CD8-positive, alpha-beta memory T cell (primary cell): ENCODE measurements at regions of chr9 and their contacts with region 1.

Region 1: DNA sequence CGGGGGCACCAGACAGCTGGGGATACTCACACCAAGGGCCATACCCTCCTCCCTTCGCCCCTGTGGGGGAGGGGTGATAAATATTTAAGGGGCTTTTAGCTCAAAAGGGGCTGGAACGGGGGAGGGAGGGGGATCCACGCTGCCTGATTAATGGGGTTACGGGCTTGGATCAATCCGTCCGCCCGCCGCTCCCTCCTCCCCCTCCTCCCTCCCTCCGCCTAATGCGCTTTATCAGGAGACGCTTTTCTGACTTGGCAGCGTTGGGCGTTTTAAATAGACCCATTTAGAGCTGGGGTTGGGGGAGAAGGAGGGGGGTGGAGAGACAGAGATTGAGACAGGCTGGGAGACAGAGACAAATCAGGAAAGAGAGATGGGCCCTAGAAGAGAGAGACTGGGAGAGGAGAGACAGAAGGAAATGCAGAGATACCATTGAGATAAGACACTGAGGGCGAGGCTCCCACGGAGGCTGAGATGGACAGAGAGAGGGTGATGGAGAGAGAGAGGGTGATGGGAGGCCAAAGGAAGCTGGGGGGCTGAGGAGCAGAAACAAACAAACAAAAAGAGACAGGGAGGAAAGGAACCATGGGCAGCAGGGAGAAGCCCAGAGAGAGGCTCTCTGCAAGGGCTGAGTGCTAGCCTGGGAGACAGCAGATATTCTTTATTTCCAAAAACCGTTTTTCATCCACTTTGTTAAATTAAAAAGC is 10.3 kb downstream of the CNTFR start:
- DNase-seq: no peak
- H3K4me3 ChIP-seq: no peak overlapping the region
- H3K4me3 Mint-ChIP-seq: peak overlapping the region in 3 of 7 donors; percentile 10 to 49 (median 18)
- H3K27ac ChIP-seq: no peak overlapping the region
- H3K27ac Mint-ChIP-seq: no peak overlapping the region
- H3K4me1 ChIP-seq: peaks cover 6% of the 10 kb centered on the region
- H3K4me1 Mint-ChIP-seq: peaks cover 4 to 15% (median 12%) of the 10 kb centered on the region in 3 donors
- H3K27me3 ChIP-seq: peaks cover 24% of the 10 kb centered on the region
- H3K27me3 Mint-ChIP-seq: peaks cover 55 to 78% of the 10 kb centered on the region in 2 donors

Region 2: DNA sequence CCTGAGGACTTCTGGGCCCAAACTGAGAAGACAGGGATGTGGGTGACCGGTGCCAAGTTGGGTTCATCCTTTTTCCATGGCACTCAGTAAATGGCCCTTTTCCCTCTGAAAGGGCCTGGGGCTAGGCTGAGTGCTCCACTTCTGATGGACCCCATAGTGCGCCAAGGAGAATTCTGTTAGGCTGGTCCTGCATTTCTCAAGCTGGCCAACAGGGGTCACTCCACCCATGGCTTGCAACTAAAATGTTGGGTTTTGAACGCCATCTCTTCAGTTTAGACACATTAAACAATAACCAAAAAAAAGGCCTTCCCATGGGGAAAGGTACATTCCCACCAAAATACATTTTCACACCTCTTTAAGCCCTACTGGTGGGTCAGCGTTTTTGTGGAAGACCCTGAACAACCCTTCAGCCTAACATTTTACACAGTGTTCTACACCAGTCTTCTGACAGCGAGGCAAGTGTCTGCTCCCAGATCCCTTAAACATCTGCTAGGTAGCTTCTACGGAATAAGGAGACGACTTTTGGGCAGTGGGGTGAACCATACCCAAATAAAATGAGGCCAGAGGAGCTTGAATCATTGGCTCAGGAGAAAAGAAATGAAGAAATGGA is 17.0 kb before region 1 on chr9:
- CTCF ChIA-PET with region 1: no interaction called
- POLR2A ChIA-PET with region 1: no interaction called
- DNase-seq: no peak
- H3K4me3 ChIP-seq: no peak overlapping the region
- H3K4me3 Mint-ChIP-seq: no peak overlapping the region
- H3K27ac ChIP-seq: no peak overlapping the region
- H3K27ac Mint-ChIP-seq: no peak overlapping the region
- H3K4me1 ChIP-seq: no peaks in the 10 kb centered on the region
- H3K4me1 Mint-ChIP-seq: peaks cover 0 to 2% (median 0%) of the 10 kb centered on the region in 3 donors
- H3K27me3 ChIP-seq: peaks cover 4% of the 10 kb centered on the region
- H3K27me3 Mint-ChIP-seq: peaks cover 13 to 58% of the 10 kb centered on the region in 2 donors

Region 3: DNA sequence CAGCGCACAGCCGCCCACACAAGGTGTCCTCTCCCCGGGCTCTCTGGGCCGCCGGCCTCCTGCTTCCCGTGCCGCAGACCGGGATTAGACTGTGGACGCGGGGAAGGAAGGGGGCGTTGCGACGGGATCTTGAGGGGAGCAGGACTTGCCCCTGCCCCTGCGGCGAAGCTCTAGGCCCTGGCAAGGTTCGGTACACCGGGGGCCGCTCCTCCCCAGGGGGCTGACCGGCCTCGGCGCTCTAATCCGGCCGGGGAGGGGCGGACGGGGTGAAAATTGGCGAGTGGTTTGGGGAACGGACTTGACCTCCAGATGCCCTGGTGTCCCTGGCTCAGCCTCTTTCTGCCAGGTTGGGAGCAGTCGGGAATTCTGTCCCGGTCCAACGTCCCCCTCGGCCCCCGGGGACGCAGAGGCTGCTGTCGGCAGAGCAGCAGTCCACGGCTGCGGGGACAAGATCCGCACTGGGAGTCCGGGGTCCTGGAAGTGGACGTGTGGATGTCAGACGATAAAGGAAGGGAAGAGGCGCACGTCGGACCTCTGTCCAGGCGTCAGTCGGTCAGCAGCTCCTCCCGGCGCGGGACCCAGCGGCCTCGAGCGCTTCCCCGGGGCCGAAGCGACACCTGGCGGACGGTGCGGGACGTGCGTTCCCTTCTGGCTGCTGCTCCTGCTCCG is 12.1 kb after region 1 on chr9:
- CTCF ChIA-PET with region 1: interaction called, 15 read pairs
- POLR2A ChIA-PET with region 1: no interaction called
- DNase-seq: peak; percentile 62 to 76 (median 68)
- H3K4me3 ChIP-seq: peak overlapping the region; percentile 66
- H3K4me3 Mint-ChIP-seq: peak overlapping the region; percentile 67 to 89 (median 76)
- H3K27ac ChIP-seq: no peak overlapping the region
- H3K27ac Mint-ChIP-seq: no peak overlapping the region
- H3K4me1 ChIP-seq: peaks cover 15% of the 10 kb centered on the region
- H3K4me1 Mint-ChIP-seq: peaks cover 17 to 40% (median 23%) of the 10 kb centered on the region in 3 donors
- H3K27me3 ChIP-seq: peaks cover 59% of the 10 kb centered on the region
- H3K27me3 Mint-ChIP-seq: peaks cover 55 to 78% of the 10 kb centered on the region in 2 donors

Region 4: GRCh38 chr9:34825775-34826174 is 246.5 kb after region 1 on chr9:
- CTCF ChIA-PET with region 1: no interaction called
- POLR2A ChIA-PET with region 1: no interaction called
- DNase-seq: no peak
- H3K4me3 ChIP-seq: no peak overlapping the region
- H3K4me3 Mint-ChIP-seq: no peak overlapping the region
- H3K27ac ChIP-seq: no peak overlapping the region
- H3K27ac Mint-ChIP-seq: no peak overlapping the region
- H3K4me1 ChIP-seq: no peaks in the 10 kb centered on the region
- H3K4me1 Mint-ChIP-seq: no peaks in the 10 kb centered on the region
- H3K27me3 ChIP-seq: no peaks in the 10 kb centered on the region
- H3K27me3 Mint-ChIP-seq: peaks cover 12 to 31% of the 10 kb centered on the region in 2 donors